GM13977 (cell line): ENCODE measurements at regions of chr1 and their contacts with region 1.

Region 1: GRCh38 chr1:9004700-9005394 is 21.4 kb downstream of the SLC2A7 start:
- DNase-seq: peak; percentile 91
- CTCF ChIP-seq: peak; percentile 90

Region 2: GRCh38 chr1:9101510-9102146 is 96.8 kb after region 1 on chr1:
- in situ Hi-C with region 1: loop called (anchors 5 kb)
- DNase-seq: peak; percentile 81
- CTCF ChIP-seq: peak; percentile 88

Region 3: GRCh38 chr1:9234223-9235095 is 229.6 kb after region 1 on chr1 and contains the start of gene H6PD:
- in situ Hi-C with region 1: no loop called
- DNase-seq: peak; percentile 99
- CTCF ChIP-seq: peak; percentile 83